Ascending aorta (tissue), 2 donors: ENCODE measurements at regions of chr4 and their contacts with region 1.

Region 1: GRCh38 chr4:73019462-73020047 is 50.0 kb downstream of the COX18 start:
- DNase-seq: no peak
- H3K4me3 ChIP-seq: no peak overlapping the region
- H3K27ac ChIP-seq: no peak overlapping the region
- H3K4me1 ChIP-seq: no peaks in the 10 kb centered on the region
- H3K27me3 ChIP-seq: no peaks in the 10 kb centered on the region
- CTCF ChIP-seq: peak; percentile 52 to 77 (median 69)

Region 2: DNA sequence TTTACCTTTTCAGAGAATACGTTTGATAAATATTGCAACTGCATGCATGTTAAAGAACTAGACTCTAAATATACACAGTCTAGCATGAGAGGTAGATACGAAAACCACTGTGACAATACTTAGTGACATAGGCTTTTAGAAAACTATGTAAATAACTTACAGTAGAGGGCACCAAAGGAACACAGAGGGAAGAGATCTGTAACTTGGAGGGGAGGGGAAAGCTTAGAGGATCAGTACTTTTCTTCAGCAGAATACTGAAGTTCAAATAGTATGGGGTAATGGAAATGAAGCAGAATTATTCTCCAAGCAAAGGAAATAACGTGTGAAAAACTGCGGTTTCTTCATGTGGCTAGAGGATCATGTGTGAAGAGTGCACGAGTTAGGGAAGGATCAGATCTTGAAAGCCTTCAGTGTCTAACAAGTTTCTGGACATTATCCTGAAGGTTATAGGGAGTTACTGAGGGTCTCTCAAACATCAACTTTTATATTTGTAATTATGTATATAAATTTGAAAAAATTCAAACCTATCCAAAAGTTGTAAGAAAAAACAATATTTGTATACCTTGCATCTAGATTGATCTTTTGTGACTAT is 723.5 kb before region 1 on chr4:
- intact Hi-C with region 1: loop called (anchors 10 kb)
- DNase-seq: no peak
- H3K4me3 ChIP-seq: no peak overlapping the region
- H3K27ac ChIP-seq: no peak overlapping the region
- H3K4me1 ChIP-seq: no peaks in the 10 kb centered on the region
- H3K27me3 ChIP-seq: no peaks in the 10 kb centered on the region
- CTCF ChIP-seq: peak in 2 of 3 experiments; percentile 69 to 76

Region 3: DNA sequence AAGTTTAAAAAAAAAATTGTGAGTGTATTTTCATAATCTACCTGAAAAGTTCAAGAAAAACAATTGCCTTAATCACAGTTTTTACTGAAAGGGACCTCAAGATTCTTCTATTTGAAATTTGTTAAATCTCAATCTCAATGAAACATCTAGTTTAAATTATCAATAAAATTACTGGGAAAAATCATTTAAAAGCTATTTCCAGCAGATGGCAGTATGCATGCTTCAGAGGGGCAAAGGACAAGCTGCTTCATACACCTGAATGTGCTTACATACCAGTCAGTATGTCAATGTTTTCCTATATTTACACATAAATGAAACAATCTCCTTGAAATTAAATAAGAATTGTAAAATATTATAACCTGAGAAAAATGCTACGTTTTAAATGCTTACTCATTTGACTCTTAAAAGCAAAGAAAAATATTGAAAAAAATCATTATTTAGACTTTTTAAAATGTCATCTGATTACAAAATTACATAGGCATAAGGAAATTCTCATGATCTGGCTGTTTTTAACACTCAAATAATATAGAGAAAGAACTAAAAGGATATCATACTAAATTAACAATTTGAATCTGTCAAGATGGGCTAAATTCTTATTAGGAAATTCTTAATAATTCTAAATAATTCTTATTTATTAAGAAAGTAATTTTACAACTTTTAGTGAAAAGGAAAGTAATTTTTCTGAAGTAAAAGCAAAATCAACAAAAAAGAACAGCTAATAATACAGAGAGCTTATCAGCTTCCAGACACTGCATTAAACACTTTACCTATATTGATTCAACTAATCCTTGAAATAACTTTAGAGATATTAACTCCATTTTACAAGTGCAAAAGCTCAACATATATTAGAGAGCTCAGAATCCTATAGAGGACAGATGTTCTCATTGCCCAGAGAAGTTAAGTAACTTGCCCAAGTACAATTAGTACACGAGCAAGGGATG is 692.6 kb before region 1 on chr4:
- intact Hi-C with region 1: loop called (anchors 2 kb)
- DNase-seq: no peak
- H3K4me3 ChIP-seq: no peak overlapping the region
- H3K27ac ChIP-seq: no peak overlapping the region
- H3K4me1 ChIP-seq: no peaks in the 10 kb centered on the region
- H3K27me3 ChIP-seq: no peaks in the 10 kb centered on the region
- CTCF ChIP-seq: peak in 2 of 3 experiments; percentile 48 to 71

Region 4: DNA sequence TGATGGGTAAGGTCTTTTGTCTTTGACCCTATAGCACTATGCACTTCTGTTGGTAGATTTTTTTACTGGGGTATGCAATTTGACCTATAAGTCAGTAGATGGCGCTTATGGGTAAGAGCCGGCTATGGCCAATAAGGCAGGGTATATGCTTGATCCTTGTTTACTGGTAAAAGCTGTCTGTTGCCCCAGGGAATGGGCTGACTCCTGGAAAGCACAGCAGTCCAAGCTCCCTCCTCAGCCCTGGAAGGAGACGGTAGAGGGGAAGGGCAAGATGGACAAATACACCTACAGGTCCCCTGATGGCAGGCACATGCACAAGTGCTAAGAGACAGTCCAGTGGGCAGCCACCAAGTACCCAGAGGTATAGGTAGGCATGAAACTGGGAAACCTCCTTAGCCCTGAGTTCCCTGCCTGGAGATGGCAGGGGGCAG is 514.2 kb before region 1 on chr4:
- intact Hi-C with region 1: loop called (anchors 5 kb)
- DNase-seq: no peak
- H3K4me3 ChIP-seq: no peak overlapping the region
- H3K27ac ChIP-seq: no peak overlapping the region
- H3K4me1 ChIP-seq: no peaks in the 10 kb centered on the region
- H3K27me3 ChIP-seq: no peaks in the 10 kb centered on the region
- CTCF ChIP-seq: peak; percentile 24 to 67 (median 43)

Region 5: DNA sequence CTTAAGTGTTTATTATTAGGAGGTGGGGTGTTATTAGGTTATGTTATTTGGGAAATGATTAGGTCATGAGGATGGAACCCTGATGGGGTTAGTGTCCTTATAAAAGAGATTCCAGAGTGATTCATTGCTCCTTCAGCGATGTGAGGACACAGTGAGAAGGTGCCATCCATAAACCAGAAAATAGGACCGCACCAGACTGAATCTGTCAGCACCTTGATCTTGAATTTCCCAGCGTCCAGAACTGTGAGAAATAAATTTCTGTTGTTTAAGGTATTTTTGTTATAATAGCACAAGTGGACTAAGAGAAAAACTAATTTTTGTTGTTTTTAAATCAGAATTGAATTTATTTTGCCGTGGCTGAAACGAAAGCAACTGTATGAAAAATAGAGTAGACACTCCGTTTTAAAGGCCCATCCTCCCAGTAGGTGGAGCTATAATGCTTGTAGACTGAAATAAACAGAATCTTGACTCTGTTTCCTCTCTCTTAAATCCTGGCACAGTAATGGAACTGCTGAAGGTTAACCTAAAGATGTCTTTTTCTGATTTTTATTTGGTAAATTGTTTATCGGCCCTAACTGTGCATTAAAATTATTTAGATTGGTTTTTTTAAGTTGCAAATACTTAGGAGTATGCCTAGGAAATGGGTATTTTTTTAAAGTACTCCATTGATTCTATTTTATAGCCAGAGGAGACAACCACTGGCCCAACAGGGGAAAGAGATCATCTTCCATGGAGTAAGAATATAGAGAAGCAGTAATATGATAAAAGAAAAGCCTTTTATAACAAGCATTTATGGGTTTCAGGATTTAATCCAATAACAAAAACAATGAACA is 317.4 kb before region 1 on chr4:
- intact Hi-C with region 1: loop called (anchors 1 kb)
- DNase-seq: no peak
- H3K4me3 ChIP-seq: peak overlapping the region; percentile 49 to 59
- H3K27ac ChIP-seq: no peak overlapping the region
- H3K4me1 ChIP-seq: no peaks in the 10 kb centered on the region
- H3K27me3 ChIP-seq: no peaks in the 10 kb centered on the region
- CTCF ChIP-seq: peak; percentile 35 to 71 (median 67)

Region 6: GRCh38 chr4:72909461-72909860 is 110.1 kb before region 1 on chr4:
- intact Hi-C with region 1: loop called (anchors 2 kb)
- DNase-seq: no peak
- H3K4me3 ChIP-seq: no peak overlapping the region
- H3K27ac ChIP-seq: no peak overlapping the region
- H3K4me1 ChIP-seq: no peaks in the 10 kb centered on the region
- H3K27me3 ChIP-seq: no peaks in the 10 kb centered on the region
- CTCF ChIP-seq: peak in 2 of 3 experiments; percentile 19 to 43

Region 7: GRCh38 chr4:73080789-73081188 is 61.2 kb after region 1 on chr4:
- intact Hi-C with region 1: no loop called
- DNase-seq: no peak
- H3K4me3 ChIP-seq: no peak overlapping the region
- H3K27ac ChIP-seq: no peak overlapping the region
- H3K4me1 ChIP-seq: no peaks in the 10 kb centered on the region
- H3K27me3 ChIP-seq: no peaks in the 10 kb centered on the region
- CTCF ChIP-seq: no peak